Motor neuron (in vitro differentiated cells): ENCODE measurements at regions of chr2 and their contacts with region 1.

Region 1: GRCh38 chr2:113889471-113890252 is at the start of gene ACTR3:
- ATAC-seq: peak; percentile 71 to 93 (median 90)
- H3K4me3 ChIP-seq: peak within 1 kb of the TSS; percentile 65 to 88 (median 69)
- H3K27ac ChIP-seq: peak within 1 kb of the TSS; percentile 89 to 95
- H3K4me1 ChIP-seq: peaks cover 16 to 27% of the 10 kb centered on the region in 2 donors
- total RNA-seq, gene ACTR3: 69.7 to 323 (median 135) TPM

Region 2: GRCh38 chr2:113756355-113757137 is 133.1 kb before region 1 on chr2 and contains the start of gene SLC35F5:
- in situ Hi-C with region 1: loop called in 1 of 9 experiments (anchors 25 kb)
- ATAC-seq: peak; percentile 91 to 97 (median 96)
- H3K4me3 ChIP-seq: peak within 1 kb of the TSS; percentile 79 to 91 (median 89)
- H3K27ac ChIP-seq: peak within 1 kb of the TSS; percentile 88 to 89
- H3K4me1 ChIP-seq: peaks cover 4 to 13% of the 10 kb centered on the region in 2 donors
- total RNA-seq, gene SLC35F5: 19.9 to 154 (median 46.0) TPM